HEK293T (cell line): ENCODE measurements at regions of chr2 and their contacts with region 1.

Region 1: DNA sequence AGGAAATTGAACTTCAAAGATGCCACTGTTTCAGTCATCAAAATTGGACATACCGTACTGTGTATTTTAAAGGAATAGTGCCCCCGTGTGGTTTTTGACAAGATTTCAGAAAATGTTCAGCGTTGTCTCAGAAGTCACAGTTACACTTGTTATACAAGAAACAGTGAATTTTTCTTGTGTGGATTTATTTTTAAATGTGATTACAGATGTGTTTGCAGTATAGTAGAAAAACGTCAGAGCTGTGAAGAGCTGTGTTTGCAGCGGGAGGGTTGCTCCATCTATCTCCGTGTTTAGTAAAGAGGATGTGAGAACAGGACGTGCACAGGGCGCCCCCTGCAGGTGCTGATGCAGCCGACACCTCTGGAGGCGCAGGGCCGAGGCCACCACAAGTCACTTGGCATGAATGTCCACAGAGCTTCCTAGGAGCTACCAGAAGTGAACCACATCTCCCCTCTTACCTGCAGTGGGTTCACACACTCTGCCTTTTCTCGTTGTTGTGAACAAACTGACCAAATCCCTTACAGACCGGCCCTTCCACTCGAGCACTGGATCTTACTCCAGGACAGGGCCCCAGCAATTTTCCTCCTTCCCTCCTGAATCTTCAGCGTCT is 73.1 kb downstream of the CACNB4 start:
- DNase-seq: peak; percentile 76

Region 2: DNA sequence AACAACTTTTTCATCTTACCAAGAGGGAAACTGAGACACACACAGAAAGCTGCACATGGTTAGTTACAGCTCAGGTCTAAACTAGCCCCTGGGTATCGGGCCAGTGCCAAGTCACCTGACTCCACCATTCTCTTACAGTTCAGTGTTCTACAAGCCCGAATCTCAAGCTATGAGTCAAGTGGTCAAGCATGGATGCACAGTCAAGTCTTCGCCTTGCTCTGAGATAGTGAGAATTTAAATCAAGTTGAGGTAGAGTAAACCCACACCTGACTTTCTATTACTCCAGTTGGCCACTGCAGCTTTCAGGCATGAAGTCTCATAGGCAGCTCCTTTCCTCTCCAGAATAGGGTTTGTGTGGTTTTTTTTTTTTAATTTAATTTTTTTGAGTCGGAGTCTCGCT is 163.1 kb before region 1 on chr2:
- CTCF ChIA-PET with region 1: no interaction called
- POLR2A ChIA-PET with region 1: no interaction called
- DNase-seq: no peak

Region 3: DNA sequence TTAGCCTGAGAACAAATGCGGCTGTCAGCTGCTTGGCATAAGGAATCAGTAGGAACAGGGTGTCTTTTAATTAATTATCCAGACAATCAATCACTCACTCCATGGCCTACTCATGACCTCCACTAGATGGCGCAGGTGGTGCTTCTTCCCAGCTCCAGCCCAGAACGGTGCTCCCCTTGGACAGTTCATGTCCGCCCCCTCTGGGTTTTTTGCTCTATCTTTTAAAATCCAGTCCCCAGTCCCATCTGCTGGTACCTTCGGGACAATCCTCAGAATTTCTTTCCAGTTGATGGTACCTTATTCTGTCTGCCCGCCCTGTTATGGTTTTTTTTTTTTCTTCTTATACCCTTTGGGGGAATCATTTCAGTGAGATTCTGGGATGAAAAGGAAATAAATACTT is 26.7 kb before region 1 on chr2:
- CTCF ChIA-PET with region 1: interaction called, 10 read pairs
- POLR2A ChIA-PET with region 1: no interaction called
- DNase-seq: peak; percentile 75

Region 4: GRCh38 chr2:152011741-152012140 is 14.0 kb before region 1 on chr2:
- CTCF ChIA-PET with region 1: interaction called, 13 read pairs
- POLR2A ChIA-PET with region 1: no interaction called
- DNase-seq: no peak

Region 5: DNA sequence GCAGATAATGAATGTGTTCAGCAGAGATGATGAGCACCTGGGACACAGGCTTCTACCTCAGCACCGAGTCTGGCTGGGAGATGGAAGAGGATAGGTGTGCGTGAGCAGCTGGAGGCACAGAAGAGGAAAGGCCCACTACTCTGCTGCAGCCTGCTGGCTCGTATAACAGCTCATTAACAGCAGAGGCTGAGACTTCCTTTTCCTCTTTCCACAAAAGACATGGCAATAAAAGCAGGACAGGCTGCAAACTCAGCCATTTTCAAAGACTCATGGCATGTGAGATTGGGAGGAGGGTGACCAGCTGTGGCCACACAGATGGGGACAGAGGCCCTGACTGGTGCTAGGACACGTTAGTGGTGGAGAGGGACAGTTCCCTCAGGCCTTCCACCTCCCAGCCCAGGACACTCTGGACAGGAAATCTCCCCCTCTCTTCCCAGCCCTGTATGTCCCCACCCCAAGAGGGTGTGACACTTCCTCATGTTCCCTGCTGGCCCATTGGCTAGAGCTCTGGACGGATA is 12.7 kb after region 1 on chr2:
- CTCF ChIA-PET with region 1: interaction called, 21 read pairs
- POLR2A ChIA-PET with region 1: no interaction called
- DNase-seq: no peak